PC-3 (cell line): ENCODE measurements at regions of chr18 and their contacts with region 1.

Region 1: DNA sequence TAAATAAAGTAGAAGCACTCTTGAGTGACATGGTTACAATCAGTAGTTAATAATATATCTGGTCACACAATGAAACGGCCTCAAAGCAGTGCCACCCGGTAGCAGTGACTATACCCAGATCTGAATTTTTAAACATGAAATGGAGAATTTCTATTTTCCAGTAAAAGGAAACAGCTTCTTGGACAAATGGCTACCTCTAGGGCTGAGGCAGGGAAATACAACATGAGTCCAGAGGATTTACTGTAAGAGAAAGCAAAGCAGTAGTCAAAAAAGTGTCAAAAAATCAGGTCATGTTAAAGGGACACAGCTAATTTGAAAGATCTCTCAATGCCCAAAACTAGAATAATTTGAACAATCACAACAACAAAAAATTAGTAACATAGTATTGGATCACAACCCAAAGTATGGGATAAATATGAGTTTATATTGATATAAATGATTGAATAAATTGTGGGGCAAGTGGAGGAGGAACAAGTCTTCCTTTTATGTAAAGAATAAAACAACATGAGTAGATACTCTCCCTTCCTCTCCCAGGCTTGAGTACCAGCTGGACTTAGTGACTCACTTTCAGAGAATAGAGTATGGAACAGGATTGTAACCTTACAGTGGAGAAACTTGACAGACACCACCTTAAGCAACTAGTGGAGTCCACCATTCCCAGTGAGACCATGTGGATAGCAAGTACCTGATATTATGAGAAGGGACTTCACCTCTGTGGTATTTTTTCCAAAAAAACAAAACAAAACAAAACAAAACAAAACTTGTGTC is 180.8 kb downstream of the MBD2 start:
- DNase-seq: peak; percentile 36
- ATAC-seq: peak; percentile 31; the same call in 1 of the 2 replicates
- H3K4me3 ChIP-seq: no peak overlapping the region
- H3K27ac ChIP-seq: no peak overlapping the region
- H3K4me1 ChIP-seq: no peaks in the 10 kb centered on the region
- H3K27me3 ChIP-seq: no peaks in the 10 kb centered on the region
- CTCF ChIP-seq: peak; percentile 59

Region 2: GRCh38 chr18:53567929-53568574 is 475.6 kb before region 1 on chr18:
- CTCF ChIA-PET with region 1: no interaction called
- POLR2A ChIA-PET with region 1: no interaction called
- intact Hi-C with region 1: loop called (anchors 10 kb)
- DNase-seq: peak; percentile 43
- ATAC-seq: no peak
- H3K4me3 ChIP-seq: no peak overlapping the region
- H3K27ac ChIP-seq: no peak overlapping the region
- H3K4me1 ChIP-seq: no peaks in the 10 kb centered on the region
- H3K27me3 ChIP-seq: peaks cover 14% of the 10 kb centered on the region
- CTCF ChIP-seq: peak; percentile 67

Region 3: GRCh38 chr18:53698907-53699306 is 344.8 kb before region 1 on chr18:
- CTCF ChIA-PET with region 1: no interaction called
- POLR2A ChIA-PET with region 1: no interaction called
- intact Hi-C with region 1: loop called (anchors 2 kb)
- DNase-seq: peak; percentile 60
- ATAC-seq: peak; percentile 84
- H3K4me3 ChIP-seq: no peak overlapping the region
- H3K27ac ChIP-seq: no peak overlapping the region
- H3K4me1 ChIP-seq: no peaks in the 10 kb centered on the region
- H3K27me3 ChIP-seq: peaks cover 27% of the 10 kb centered on the region
- CTCF ChIP-seq: peak; percentile 85

Region 4: DNA sequence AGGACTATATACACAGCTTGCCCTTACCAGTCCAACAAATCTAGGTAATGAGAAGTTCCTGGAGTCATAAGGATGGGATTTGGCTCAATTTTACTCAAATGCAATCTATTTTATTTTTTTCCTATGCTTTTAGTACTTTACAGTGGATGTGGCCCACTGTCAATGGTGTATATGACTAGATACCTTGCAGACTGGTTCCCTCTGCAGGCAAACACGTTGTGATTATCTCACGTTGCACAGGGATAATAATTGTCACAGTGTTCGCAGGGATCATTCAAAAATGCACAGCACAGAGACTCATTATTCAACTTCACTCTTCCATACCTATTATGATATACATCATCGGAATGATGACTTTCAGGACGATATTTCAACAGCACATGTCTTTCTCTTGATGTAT is 178.9 kb before region 1 on chr18:
- CTCF ChIA-PET with region 1: no interaction called
- POLR2A ChIA-PET with region 1: no interaction called
- intact Hi-C with region 1: no loop called
- DNase-seq: peak; percentile 51
- ATAC-seq: peak; percentile 76
- H3K4me3 ChIP-seq: no peak overlapping the region
- H3K27ac ChIP-seq: no peak overlapping the region
- H3K4me1 ChIP-seq: no peaks in the 10 kb centered on the region
- H3K27me3 ChIP-seq: peaks cover 23% of the 10 kb centered on the region
- CTCF ChIP-seq: peak; percentile 54

Region 5: GRCh38 chr18:53909668-53910067 is 134.0 kb before region 1 on chr18:
- CTCF ChIA-PET with region 1: no interaction called
- POLR2A ChIA-PET with region 1: no interaction called
- intact Hi-C with region 1: loop called (anchors 1 kb)
- DNase-seq: peak; percentile 70
- ATAC-seq: peak; percentile 60; the same call in 1 of the 2 replicates
- H3K4me3 ChIP-seq: no peak overlapping the region
- H3K27ac ChIP-seq: no peak overlapping the region
- H3K4me1 ChIP-seq: no peaks in the 10 kb centered on the region
- H3K27me3 ChIP-seq: peaks cover 13% of the 10 kb centered on the region; the same call in 1 of the 2 replicates
- CTCF ChIP-seq: peak; percentile 86